ENCODE measurements at regions of chr2 and their contacts with region 1.

Region 1: GRCh38 chr2:246489-247144 is 17.2 kb downstream of the SH3YL1 start:
- DNase-seq: peak; percentile 51
- ATAC-seq: peak; percentile 42
- H3K4me3 Mint-ChIP-seq: no peak overlapping the region
- H3K27ac Mint-ChIP-seq: no peak overlapping the region
- H3K4me1 Mint-ChIP-seq: peaks cover 3% of the 10 kb centered on the region
- H3K27me3 Mint-ChIP-seq: no peaks in the 10 kb centered on the region

Region 2: DNA sequence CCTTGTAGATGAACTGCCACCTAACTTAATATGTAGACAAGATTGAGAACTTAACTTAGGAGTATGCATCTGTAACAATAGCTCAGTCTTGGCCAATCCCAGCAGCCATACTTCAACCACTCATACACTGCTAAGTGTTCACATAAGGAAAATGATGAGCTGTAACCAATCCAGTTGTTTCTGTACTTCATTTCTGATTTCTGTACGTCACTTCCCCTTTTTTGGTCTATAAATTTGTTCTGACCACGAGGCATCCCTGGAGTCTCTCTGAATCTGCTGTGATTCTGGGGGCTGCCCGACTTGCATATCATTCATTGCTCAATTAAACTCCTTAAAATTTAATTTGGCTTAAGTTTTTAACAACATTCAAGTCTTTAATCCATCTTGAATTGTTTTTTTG is 10.8 kb after region 1 on chr2:
- CTCF ChIA-PET with region 1: interaction called, 25 read pairs
- POLR2A ChIA-PET with region 1: no interaction called
- DNase-seq: no peak
- ATAC-seq: no peak
- H3K4me3 Mint-ChIP-seq: no peak overlapping the region
- H3K27ac Mint-ChIP-seq: no peak overlapping the region
- H3K4me1 Mint-ChIP-seq: no peaks in the 10 kb centered on the region
- H3K27me3 Mint-ChIP-seq: no peaks in the 10 kb centered on the region

Region 3: GRCh38 chr2:262996-263738 is 16.6 kb after region 1 on chr2:
- CTCF ChIA-PET with region 1: interaction called, 25 read pairs
- POLR2A ChIA-PET with region 1: no interaction called
- DNase-seq: no peak
- ATAC-seq: no peak
- H3K4me3 Mint-ChIP-seq: peak overlapping the region; percentile 92
- H3K27ac Mint-ChIP-seq: no peak overlapping the region
- H3K4me1 Mint-ChIP-seq: peaks cover 28% of the 10 kb centered on the region
- H3K27me3 Mint-ChIP-seq: no peaks in the 10 kb centered on the region